ENCODE measurements at regions of chr1 and their contacts with region 1.

Region 1: GRCh38 chr1:158124999-158125398 is 55.7 kb upstream of the CD1D start:
- DNase-seq: peak; percentile 88
- ATAC-seq: peak; percentile 95
- H3K4me3 Mint-ChIP-seq: no peak overlapping the region
- H3K27ac Mint-ChIP-seq: no peak overlapping the region
- H3K4me1 Mint-ChIP-seq: no peaks in the 10 kb centered on the region
- H3K27me3 Mint-ChIP-seq: peaks cover 24% of the 10 kb centered on the region
- CTCF ChIP-seq: peak; percentile 72

Region 2: DNA sequence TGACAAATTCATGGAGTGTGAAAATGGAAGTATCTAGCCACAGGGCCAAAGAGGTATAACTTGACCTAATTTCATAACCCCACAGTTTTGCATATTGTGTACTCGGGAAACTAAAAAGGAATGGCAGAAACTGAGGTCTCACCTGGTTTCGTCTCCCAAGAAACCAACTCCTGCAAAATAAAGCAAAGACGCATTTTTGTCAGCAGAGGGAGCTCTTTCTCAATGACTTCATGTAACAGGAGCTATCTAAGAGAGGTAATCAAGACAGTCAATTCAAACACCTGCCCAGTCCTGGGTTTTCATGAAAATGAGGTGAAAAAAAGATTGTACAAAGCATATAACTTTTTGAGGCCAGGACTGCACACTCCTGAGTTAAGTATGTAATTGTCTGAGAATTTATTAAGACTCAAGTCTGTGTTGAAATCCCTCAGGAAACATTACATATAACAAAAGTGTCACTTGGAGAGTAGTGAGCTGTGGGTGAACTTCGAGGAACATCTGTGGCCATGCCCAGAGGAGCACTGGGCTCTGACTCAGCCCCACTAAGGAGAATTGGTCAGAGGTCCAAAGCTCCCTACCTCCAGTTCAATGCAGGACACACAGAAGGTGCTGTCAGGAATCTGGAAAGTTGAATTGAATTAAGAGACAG is 544.7 kb before region 1 on chr1:
- CTCF ChIA-PET with region 1: interaction called, 10 read pairs
- POLR2A ChIA-PET with region 1: no interaction called
- intact Hi-C with region 1: no loop called
- DNase-seq: peak; percentile 35
- ATAC-seq: no peak
- H3K4me3 Mint-ChIP-seq: no peak overlapping the region
- H3K27ac Mint-ChIP-seq: no peak overlapping the region
- H3K4me1 Mint-ChIP-seq: no peaks in the 10 kb centered on the region
- H3K27me3 Mint-ChIP-seq: no peaks in the 10 kb centered on the region
- CTCF ChIP-seq: peak; percentile 70

Region 3: GRCh38 chr1:157963713-157964112 is 161.3 kb before region 1 on chr1:
- CTCF ChIA-PET with region 1: interaction called, 103 read pairs
- POLR2A ChIA-PET with region 1: no interaction called
- intact Hi-C with region 1: loop called (anchors 5 kb)
- DNase-seq: peak; percentile 66
- ATAC-seq: peak; percentile 74
- H3K4me3 Mint-ChIP-seq: no peak overlapping the region
- H3K27ac Mint-ChIP-seq: no peak overlapping the region
- H3K4me1 Mint-ChIP-seq: no peaks in the 10 kb centered on the region
- H3K27me3 Mint-ChIP-seq: peaks cover 6% of the 10 kb centered on the region
- CTCF ChIP-seq: peak; percentile 83

Region 4: GRCh38 chr1:157969697-157970485 is 155.1 kb before region 1 on chr1:
- CTCF ChIA-PET with region 1: interaction called, 103 read pairs
- POLR2A ChIA-PET with region 1: no interaction called
- intact Hi-C with region 1: no loop called
- DNase-seq: peak; percentile 32
- ATAC-seq: no peak
- H3K4me3 Mint-ChIP-seq: no peak overlapping the region
- H3K27ac Mint-ChIP-seq: no peak overlapping the region
- H3K4me1 Mint-ChIP-seq: no peaks in the 10 kb centered on the region
- H3K27me3 Mint-ChIP-seq: no peaks in the 10 kb centered on the region
- CTCF ChIP-seq: peak; percentile 67

Region 5: DNA sequence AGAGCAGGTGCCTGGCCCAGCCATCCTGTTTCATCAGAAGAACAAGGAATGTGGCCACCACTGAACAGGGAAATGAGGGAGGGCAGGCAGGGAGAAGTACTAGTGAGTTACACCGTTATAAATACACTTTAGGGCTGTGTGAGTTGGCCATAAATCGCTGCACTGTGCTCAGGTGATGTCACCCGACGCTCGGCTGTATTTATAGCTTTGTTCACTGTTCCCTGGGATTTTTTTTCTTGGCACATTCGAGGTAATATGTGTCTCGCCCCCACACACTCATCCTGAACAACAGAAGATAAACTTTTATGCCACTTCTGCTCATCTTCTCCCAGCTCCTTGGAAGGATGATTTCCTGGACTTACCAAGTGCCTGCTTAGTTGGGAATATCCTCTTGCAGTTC is 140.5 kb before region 1 on chr1:
- CTCF ChIA-PET with region 1: interaction called, 187 read pairs
- POLR2A ChIA-PET with region 1: no interaction called
- intact Hi-C with region 1: no loop called
- DNase-seq: no peak
- ATAC-seq: no peak
- H3K4me3 Mint-ChIP-seq: no peak overlapping the region
- H3K27ac Mint-ChIP-seq: no peak overlapping the region
- H3K4me1 Mint-ChIP-seq: no peaks in the 10 kb centered on the region
- H3K27me3 Mint-ChIP-seq: peaks cover 14% of the 10 kb centered on the region
- CTCF ChIP-seq: no peak

Region 6: GRCh38 chr1:157992031-157992832 is 132.8 kb before region 1 on chr1:
- CTCF ChIA-PET with region 1: interaction called, 187 read pairs
- POLR2A ChIA-PET with region 1: no interaction called
- intact Hi-C with region 1: loop called (anchors 5 kb)
- DNase-seq: peak; percentile 67
- ATAC-seq: peak; percentile 70
- H3K4me3 Mint-ChIP-seq: no peak overlapping the region
- H3K27ac Mint-ChIP-seq: no peak overlapping the region
- H3K4me1 Mint-ChIP-seq: peaks cover 6% of the 10 kb centered on the region
- H3K27me3 Mint-ChIP-seq: peaks cover 40% of the 10 kb centered on the region
- CTCF ChIP-seq: peak; percentile 91

Region 7: GRCh38 chr1:158095737-158096335 is 29.2 kb before region 1 on chr1:
- CTCF ChIA-PET with region 1: interaction called, 145 read pairs
- POLR2A ChIA-PET with region 1: no interaction called
- intact Hi-C with region 1: no loop called
- DNase-seq: peak; percentile 56
- ATAC-seq: peak; percentile 86
- H3K4me3 Mint-ChIP-seq: no peak overlapping the region
- H3K27ac Mint-ChIP-seq: no peak overlapping the region
- H3K4me1 Mint-ChIP-seq: no peaks in the 10 kb centered on the region
- H3K27me3 Mint-ChIP-seq: no peaks in the 10 kb centered on the region
- CTCF ChIP-seq: peak; percentile 67